Ovary (tissue), 10 donors: ENCODE measurements at regions of chr1 and their contacts with region 1.

Region 1: GRCh38 chr1:110407260-110408210 is at the start of gene LAMTOR5:
- DNase-seq: peak; percentile 90 to 94 (median 93)
- H3K4me3 ChIP-seq: peak within 1 kb of the TSS; percentile 77
- H3K27ac ChIP-seq: peak within 1 kb of the TSS; percentile 85 to 87
- H3K4me1 ChIP-seq: peaks cover 6% of the 10 kb centered on the region
- H3K27me3 ChIP-seq: no peaks in the 10 kb centered on the region
- CTCF ChIP-seq: peak in 2 of 3 donors; percentile 33 to 49
- EP300 ChIP-seq: peak; percentile 62
- POLR2A ChIP-seq: peak; percentile 89
- total RNA-seq, gene LAMTOR5: 103 to 129 (median 122) TPM

Region 2: GRCh38 chr1:110209715-110210603 is 197.6 kb before region 1 on chr1 and contains the start of gene KCNC4:
- intact Hi-C with region 1: loop called in 1 of 4 experiments (anchors 10 kb)
- DNase-seq: peak; percentile 82 to 87 (median 86)
- H3K4me3 ChIP-seq: peak within 1 kb of the TSS; percentile 66
- H3K27ac ChIP-seq: peak within 1 kb of the TSS; percentile 70 to 80
- H3K4me1 ChIP-seq: peaks cover 13% of the 10 kb centered on the region
- H3K27me3 ChIP-seq: no peaks in the 10 kb centered on the region
- CTCF ChIP-seq: no peak
- EP300 ChIP-seq: no peak
- POLR2A ChIP-seq: peak; percentile 35
- total RNA-seq, gene KCNC4: 5.5 to 18.0 (median 14.2) TPM

Region 3: GRCh38 chr1:110338886-110339406 is 68.6 kb before region 1 on chr1 and contains the start of gene RBM15:
- intact Hi-C with region 1: loop called in 2 of 4 experiments (anchors 2 kb)
- DNase-seq: peak; percentile 97 to 99 (median 98)
- H3K4me3 ChIP-seq: peak within 1 kb of the TSS; percentile 96
- H3K27ac ChIP-seq: peak within 1 kb of the TSS; percentile 96 to 98
- H3K4me1 ChIP-seq: peaks cover 13% of the 10 kb centered on the region
- H3K27me3 ChIP-seq: no peaks in the 10 kb centered on the region
- CTCF ChIP-seq: no peak
- EP300 ChIP-seq: no peak
- POLR2A ChIP-seq: no peak
- total RNA-seq, gene RBM15: 21.2 to 28.7 (median 26.2) TPM